ENCODE measurements at regions of chr5 and their contacts with region 1.

Region 1: GRCh38 chr5:69492391-69492922 is at the start of gene OCLN:
- DNase-seq: peak; percentile 80
- H3K4me3 Mint-ChIP-seq: peak within 1 kb of the TSS; percentile 92
- H3K27ac Mint-ChIP-seq: peak within 1 kb of the TSS; percentile 46
- H3K4me1 Mint-ChIP-seq: no peaks in the 10 kb centered on the region
- H3K27me3 Mint-ChIP-seq: peaks cover 28% of the 10 kb centered on the region
- CTCF ChIP-seq: no peak
- total RNA-seq, gene OCLN: 9.0 and 21.7 TPM in 2 replicates

Region 2: DNA sequence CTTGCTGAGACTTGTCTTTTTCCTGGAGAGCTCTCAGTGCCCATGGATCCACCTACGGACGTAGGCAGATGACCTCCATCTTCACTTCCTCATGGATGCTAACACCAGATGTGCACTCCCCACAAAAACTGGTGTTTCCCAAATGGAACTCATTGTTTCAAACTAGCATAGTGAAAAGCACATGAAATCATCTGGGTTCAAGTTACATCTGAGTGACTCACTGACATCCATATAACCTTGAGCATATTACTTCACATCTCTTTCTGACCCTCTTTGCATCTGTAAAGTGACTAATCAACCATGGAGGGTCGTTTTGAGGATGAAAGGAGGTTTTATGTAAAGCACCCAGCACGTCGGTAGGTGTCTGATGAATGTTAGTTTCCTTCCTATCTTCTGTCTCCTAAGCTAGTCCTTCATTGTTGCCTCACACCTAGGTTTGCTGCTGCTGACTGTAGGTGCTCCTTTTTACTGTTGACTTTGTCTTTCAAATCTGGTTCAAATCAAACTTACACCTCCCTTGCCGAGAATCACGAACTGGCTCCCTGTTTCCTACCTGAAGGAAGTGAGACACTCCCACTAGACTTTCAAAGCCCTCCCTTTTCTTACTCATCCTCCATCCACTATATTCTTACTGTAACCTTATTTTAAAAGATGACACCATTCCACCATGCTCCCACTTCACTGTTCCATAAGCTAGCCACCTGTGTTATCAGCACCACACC is 10.5 kb after region 1 on chr5:
- CTCF ChIA-PET with region 1: interaction called, 3 read pairs
- POLR2A ChIA-PET with region 1: interaction called, 16 read pairs
- intact Hi-C with region 1: no loop called
- DNase-seq: peak; percentile 84
- H3K4me3 Mint-ChIP-seq: no peak overlapping the region
- H3K27ac Mint-ChIP-seq: peak overlapping the region; percentile 28
- H3K4me1 Mint-ChIP-seq: peaks cover 15% of the 10 kb centered on the region
- H3K27me3 Mint-ChIP-seq: no peaks in the 10 kb centered on the region
- CTCF ChIP-seq: no peak